ENCODE measurements at regions of chr11 and their contacts with region 1.

Region 1: GRCh38 chr11:63592975-63593395 is 21.2 kb downstream of the PLAAT3 start:
- DNase-seq: peak; percentile 20

Region 2: GRCh38 chr11:63663809-63664208 is 70.8 kb after region 1 on chr11:
- in situ Hi-C with region 1: loop called (anchors 5 kb)
- DNase-seq: no peak